Left cardiac atrium (tissue), 4 donors: ENCODE measurements at regions of chr9 and their contacts with region 1.

Region 1: DNA sequence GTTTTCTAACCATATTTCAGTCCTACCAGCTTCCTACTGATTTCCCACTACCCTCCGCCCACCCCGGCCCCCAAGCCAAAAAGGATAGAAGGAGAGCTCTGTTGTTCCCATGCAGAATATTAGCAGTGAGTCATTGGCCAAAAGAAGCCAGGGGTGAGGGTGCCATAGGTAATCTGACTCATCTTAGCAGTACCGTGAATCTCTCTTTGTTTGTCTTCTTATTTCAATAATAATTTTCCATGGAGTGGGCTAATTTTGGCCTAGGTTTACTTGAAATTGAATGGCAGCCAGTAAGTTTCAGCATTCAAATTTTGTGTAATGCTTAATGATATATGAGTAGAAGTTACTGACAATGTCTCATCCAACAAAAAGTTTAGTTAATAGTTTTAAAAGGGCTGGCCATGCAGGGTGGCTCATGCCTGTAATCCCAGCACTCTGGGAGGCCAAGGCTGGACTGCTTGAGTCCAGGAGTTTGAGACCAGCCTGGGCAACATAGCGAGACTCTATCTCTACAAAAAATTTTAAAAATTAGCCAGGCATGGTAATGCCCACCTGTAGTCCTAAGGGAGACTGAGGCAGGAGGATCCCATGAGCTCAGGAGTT is 74.2 kb downstream of the C9orf152 start:
- DNase-seq: no peak
- ATAC-seq: peak in 1 of 2 donors; percentile 73

Region 2: GRCh38 chr9:109733690-109734089 is 400.0 kb before region 1 on chr9:
- intact Hi-C with region 1: no loop called
- DNase-seq: no peak
- ATAC-seq: peak in 1 of 2 donors; percentile 31

Region 3: DNA sequence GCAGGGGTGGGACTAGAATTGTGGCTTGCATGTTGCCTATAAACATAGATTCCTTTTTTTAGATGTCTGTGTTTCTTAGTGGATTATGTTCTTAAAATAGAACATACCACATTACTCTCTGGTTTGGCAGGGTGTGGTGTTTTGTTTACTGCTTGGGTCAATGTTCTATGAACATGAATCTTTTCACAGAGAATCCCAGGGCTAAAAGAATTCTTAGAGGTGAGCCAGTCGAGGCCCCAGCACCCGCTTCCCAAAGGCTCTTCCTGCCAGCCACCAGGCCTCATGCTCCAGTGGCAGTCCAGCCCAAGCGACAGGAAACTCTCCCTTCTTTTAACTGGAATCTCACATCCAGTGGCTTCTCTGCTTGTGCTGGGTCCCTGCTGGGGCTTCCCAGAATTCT is 52.3 kb before region 1 on chr9:
- intact Hi-C with region 1: loop called in 1 of 2 experiments (anchors 10 kb)
- DNase-seq: no peak
- ATAC-seq: peak; percentile 49 to 70